ENCODE measurements at regions of chr1 and their contacts with region 1.

Region 1: GRCh38 chr1:149886396-149887195 is 12.8 kb upstream of the BOLA1 start:
- DNase-seq: peak; percentile 51 to 97 (median 93)
- ATAC-seq: peak; percentile 69 to 73
- H3K4me3 Mint-ChIP-seq: no peak overlapping the region
- H3K27ac Mint-ChIP-seq: no peak overlapping the region
- H3K4me1 Mint-ChIP-seq: peaks cover 9 to 16% (median 11%) of the 10 kb centered on the region in 4 donors
- H3K27me3 Mint-ChIP-seq: no peaks in the 10 kb centered on the region

Region 2: DNA sequence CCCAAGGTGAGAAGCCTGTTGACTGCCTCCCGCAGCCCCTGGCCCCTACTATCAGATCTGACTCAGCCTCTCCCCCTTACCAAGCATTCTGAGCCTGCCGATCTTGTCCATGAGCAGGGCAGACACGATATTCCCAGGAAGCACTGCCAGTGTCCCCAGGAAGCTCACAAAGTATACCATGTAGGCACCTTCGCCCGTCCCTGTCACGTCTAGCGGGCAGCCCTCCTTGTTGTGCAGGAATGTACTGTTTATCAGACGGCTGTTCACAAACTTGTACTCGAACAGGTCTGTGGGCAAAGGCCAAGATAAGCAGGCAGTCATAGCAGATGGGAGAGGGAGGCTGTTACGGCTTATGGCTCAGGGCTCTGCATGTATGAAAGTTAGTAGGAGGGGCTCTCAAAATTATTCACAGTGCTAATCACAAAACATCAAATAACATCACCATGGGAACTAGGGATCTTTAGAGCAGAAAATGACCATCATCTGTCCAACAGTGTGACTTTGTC is 20.0 kb after region 1 on chr1:
- POLR2A ChIA-PET with region 1: interaction called, 88 read pairs
- DNase-seq: no peak
- ATAC-seq: no peak
- H3K4me3 Mint-ChIP-seq: peak overlapping the region in 1 of 10 donors; percentile 35
- H3K27ac Mint-ChIP-seq: no peak overlapping the region
- H3K4me1 Mint-ChIP-seq: peaks cover 0 to 5% (median 1%) of the 10 kb centered on the region in 4 donors
- H3K27me3 Mint-ChIP-seq: no peaks in the 10 kb centered on the region

Region 3: DNA sequence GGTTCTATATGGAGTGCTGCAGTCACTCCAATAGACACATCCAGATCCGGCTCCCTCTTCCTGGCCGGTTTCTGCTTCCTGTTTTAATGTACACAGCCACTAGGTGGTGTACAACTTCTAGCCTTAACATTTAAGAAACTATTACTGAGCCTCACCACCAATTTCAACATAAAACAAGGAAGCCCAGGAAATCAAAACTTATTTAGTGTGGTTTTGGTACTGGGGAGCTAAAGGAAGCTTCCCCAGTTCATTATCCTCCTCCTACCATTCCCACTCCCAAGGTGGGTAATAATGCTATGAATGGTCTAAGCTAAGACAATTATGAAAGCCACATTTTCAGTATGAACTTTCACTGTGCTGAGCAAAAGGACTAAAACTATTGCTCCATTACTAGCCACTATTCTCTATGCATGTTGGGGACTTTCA is 75.5 kb after region 1 on chr1:
- POLR2A ChIA-PET with region 1: interaction called, 13 read pairs
- DNase-seq: peak in 8 of 10 donors; percentile 13 to 62 (median 40)
- ATAC-seq: peak; percentile 71 to 85
- H3K4me3 Mint-ChIP-seq: no peak overlapping the region
- H3K27ac Mint-ChIP-seq: peak overlapping the region in 5 of 10 donors; percentile 0 to 78 (median 29)
- H3K4me1 Mint-ChIP-seq: peaks cover 2 to 15% (median 8%) of the 10 kb centered on the region in 4 donors
- H3K27me3 Mint-ChIP-seq: peaks cover 0 to 1% (median 0%) of the 10 kb centered on the region in 5 donors

Region 4: DNA sequence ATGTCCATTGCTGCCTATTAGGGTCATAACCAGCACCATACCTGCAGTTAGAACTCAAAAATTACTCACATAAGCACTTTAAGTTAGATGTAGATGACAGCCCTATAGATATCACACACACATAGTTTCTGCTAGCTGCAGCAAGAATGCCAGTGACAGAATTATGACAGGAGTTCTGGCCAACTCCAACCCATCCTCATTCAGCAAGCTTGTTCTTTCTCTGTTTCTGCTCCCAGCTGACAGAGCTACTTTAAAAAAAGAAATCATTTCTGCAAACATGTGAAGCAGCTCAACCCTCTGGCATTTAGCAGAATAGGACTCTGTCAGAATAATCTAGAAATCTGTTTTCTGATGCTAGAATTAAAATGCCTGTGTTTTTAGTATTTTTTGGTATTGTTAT is 147.7 kb after region 1 on chr1:
- POLR2A ChIA-PET with region 1: no interaction called
- DNase-seq: no peak
- ATAC-seq: no peak
- H3K4me3 Mint-ChIP-seq: no peak overlapping the region
- H3K27ac Mint-ChIP-seq: no peak overlapping the region
- H3K4me1 Mint-ChIP-seq: no peaks in the 10 kb centered on the region
- H3K27me3 Mint-ChIP-seq: peaks cover 0 to 13% (median 1%) of the 10 kb centered on the region in 5 donors

Region 5: GRCh38 chr1:150067184-150068036 is 180.8 kb after region 1 on chr1 and contains the start of gene VPS45:
- POLR2A ChIA-PET with region 1: interaction called, 13 read pairs
- DNase-seq: peak; percentile 56 to 86 (median 68)
- ATAC-seq: peak; percentile 92 to 93
- H3K4me3 Mint-ChIP-seq: peak within 1 kb of the TSS; percentile 87 to 97 (median 94)
- H3K27ac Mint-ChIP-seq: peak within 1 kb of the TSS; percentile 88 to 96 (median 94)
- H3K4me1 Mint-ChIP-seq: peaks cover 20 to 41% (median 32%) of the 10 kb centered on the region in 4 donors
- H3K27me3 Mint-ChIP-seq: no peaks in the 10 kb centered on the region
- polyA plus RNA-seq, gene VPS45: 21.8 to 29.9 (median 27.8) TPM

Region 6: DNA sequence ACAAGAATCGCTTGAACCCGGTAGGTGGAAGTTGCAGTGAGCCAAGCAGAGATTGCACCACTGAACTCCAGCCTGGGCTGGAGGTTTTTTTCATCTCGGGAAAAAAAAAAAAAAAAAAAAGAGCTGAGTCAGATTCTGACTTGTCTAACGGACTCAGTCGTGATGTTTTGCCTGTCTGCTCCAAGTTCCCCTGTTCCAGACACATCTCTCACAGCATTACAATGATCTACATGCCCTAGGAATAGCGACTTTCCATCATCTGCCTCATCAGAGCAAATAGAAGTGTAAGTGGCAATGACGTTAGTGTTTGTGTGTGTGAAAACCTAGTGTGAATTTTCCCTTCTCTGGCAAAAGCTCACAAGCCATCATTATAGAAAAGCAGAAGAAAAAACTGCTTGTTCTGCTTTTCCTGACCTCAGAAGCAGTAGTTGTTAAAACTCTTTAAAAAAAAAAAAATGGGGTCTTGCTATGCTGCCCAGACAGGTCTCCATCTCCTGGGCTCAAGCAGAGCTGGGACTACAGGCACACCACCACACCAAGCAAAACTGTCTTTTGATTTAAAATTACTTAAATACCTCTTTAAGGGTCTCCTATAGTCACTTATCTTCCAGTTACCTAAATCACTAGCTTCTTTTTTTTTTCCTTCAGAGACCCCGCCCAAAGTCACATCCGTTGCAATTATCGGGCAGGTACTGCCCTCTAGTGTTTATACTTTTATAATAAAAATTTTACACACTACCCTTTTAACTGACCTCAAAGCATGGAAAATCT is 300.4 kb after region 1 on chr1:
- POLR2A ChIA-PET with region 1: interaction called, 11 read pairs
- DNase-seq: peak in 6 of 10 donors; percentile 31 to 74 (median 59)
- ATAC-seq: peak; percentile 87 to 88
- H3K4me3 Mint-ChIP-seq: peak overlapping the region in 7 of 10 donors; percentile 1 to 76 (median 27)
- H3K27ac Mint-ChIP-seq: peak overlapping the region in 6 of 10 donors; percentile 40 to 89 (median 54)
- H3K4me1 Mint-ChIP-seq: peaks cover 0 to 19% (median 6%) of the 10 kb centered on the region in 4 donors
- H3K27me3 Mint-ChIP-seq: no peaks in the 10 kb centered on the region

Region 7: GRCh38 chr1:150507905-150508854 is 621.6 kb after region 1 on chr1 and contains the start of gene ECM1:
- POLR2A ChIA-PET with region 1: no interaction called
- DNase-seq: no peak
- ATAC-seq: no peak
- H3K4me3 Mint-ChIP-seq: no peak within 1 kb of the TSS
- H3K27ac Mint-ChIP-seq: peak within 1 kb of the TSS in 3 of 10 donors; percentile 1 to 43 (median 39)
- H3K4me1 Mint-ChIP-seq: peaks cover 0 to 2% (median under 1%) of the 10 kb centered on the region in 4 donors
- H3K27me3 Mint-ChIP-seq: no peaks in the 10 kb centered on the region
- polyA plus RNA-seq, gene ECM1: 0.17 TPM in 1 of 3 donors, not detected in the others